AG04450 (cell line): ENCODE measurements at regions of chr2 and their contacts with region 1.

Region 1: DNA sequence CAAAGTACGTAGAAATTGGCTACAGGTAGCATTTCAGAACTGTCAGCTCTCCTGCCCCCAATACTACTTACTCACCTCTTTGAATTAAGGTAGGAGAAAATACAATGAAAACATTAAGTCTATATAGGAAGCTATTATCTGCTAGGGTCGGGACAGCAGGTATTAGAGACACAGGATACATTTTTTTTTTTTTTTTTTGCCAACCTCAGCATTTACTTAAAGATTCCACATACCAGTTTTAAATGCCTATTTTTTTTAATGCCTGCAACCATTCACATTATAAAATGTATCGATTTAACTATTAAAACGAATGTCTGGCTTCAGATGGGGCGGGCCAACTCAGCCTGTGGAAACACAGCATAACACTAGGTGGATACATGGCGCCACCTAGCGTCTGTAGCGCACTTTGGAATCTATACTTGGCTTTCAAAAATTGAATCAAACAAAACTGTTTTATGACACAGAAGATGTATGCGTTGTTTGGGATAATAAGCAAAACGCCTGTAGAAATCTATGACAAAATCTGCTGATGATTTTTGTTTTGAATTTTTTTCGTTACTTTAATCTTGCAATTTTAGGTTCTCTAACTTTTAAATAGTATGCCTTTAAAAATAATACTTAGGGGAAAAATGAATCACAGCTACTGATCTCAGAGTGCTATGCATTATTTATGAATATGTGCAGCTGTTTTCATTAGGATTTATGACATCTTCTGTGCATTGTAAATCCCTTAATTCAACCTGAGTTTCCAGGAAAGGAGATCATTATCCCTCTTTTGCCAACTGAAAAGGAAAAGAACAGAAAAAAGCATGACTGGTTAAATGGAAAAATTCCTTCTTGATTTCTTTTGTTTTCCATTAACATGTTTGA is 261.0 kb downstream of the NYAP2 start:
- DNase-seq: peak; percentile 37
- H3K4me3 ChIP-seq: no peak overlapping the region
- H3K27ac ChIP-seq: no peak overlapping the region
- H3K27me3 ChIP-seq: no peaks in the 10 kb centered on the region
- CTCF ChIP-seq: peak; percentile 94

Region 2: GRCh38 chr2:225122583-225123486 is 537.7 kb before region 1 on chr2:
- CTCF ChIA-PET with region 1: interaction called, 52 read pairs
- POLR2A ChIA-PET with region 1: no interaction called
- DNase-seq: no peak
- H3K4me3 ChIP-seq: no peak overlapping the region
- H3K27ac ChIP-seq: no peak overlapping the region
- H3K27me3 ChIP-seq: no peaks in the 10 kb centered on the region
- CTCF ChIP-seq: peak; percentile 55

Region 3: GRCh38 chr2:225282858-225283710 is 377.4 kb before region 1 on chr2:
- CTCF ChIA-PET with region 1: interaction called, 63 read pairs
- POLR2A ChIA-PET with region 1: no interaction called
- DNase-seq: no peak
- H3K4me3 ChIP-seq: no peak overlapping the region
- H3K27ac ChIP-seq: no peak overlapping the region
- H3K27me3 ChIP-seq: no peaks in the 10 kb centered on the region
- CTCF ChIP-seq: peak; percentile 87

Region 4: DNA sequence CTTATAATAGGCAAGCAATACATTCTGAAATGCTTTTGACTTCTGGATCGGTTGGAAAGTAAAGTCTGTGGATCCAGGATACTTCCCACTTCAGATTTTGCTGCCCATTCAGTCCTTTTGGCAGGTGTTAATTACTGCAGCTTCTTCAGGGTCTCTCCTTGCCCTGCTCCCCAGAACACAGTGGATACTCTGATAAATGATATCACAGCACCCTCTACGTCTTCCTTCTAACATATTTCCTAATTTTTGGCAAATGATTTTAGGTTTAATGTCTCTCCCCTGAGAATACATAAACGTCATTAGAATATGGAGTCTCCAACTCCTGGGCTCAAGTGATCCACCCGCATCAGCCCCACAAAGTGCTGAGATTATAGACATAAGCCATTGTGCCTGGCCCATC is 11.2 kb before region 1 on chr2:
- CTCF ChIA-PET with region 1: interaction called, 10 read pairs
- POLR2A ChIA-PET with region 1: no interaction called
- DNase-seq: no peak
- H3K4me3 ChIP-seq: no peak overlapping the region
- H3K27ac ChIP-seq: no peak overlapping the region
- H3K27me3 ChIP-seq: no peaks in the 10 kb centered on the region
- CTCF ChIP-seq: no peak